Activated T-helper 1 cell treated with anti-CD3 and anti-CD28 coated beads, Interleukin-12 subunit alpha, Interleukin-12 subunit beta, Interleukin-2, Interleukin-4 antibody, amounts not matched to agents 30 ng/mL and 10 ng/mL and 1 ng/mL, durations not matched to agents 14 hours and 24 hours and 36 hours (primary cell): ENCODE measurements at regions of chr22 and their contacts with region 1.

Region 1: DNA sequence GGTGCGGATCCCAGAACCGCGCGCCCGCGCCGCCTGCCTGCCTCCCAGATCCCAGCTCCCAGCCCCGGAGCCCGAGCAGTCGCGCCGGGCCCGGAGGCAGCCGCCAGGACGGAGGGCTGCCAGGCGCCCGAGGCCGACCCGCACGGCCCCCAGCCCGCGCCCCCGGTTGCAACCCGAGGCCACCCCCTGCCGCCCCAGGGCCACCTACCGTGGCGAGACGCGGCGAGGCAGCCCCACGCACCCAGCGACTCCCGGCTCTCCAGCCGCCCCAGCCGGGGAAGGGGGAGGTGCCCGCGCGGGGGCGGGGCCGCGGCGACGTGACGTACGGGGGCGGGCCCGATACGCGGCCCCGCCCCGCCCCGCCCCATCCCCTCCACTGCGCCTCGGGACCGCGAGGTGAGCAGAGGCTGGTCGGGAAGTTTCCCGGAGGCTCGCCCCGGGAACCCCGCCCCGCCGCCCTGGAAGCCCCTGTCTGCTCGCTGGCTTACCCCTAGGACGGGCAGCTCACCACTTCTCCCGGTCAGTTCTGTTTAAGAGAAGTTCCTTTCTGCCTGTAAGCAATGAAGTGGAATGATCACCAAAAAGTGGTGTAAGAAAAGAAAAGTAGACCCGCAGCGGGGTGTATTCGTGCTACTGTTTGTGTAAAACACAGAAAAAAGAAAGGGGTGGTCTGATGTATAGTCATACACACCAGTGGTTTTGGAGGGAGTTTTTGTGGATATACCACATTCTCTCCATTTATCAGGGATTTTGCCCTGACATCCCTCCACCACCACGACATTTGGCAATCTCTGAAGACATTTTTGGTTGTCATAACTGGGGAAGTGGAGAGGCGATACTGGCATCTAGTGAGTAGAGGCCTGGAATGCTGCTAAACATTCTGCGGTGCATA is at the start of gene TPST2:
- DNase-seq: peak; percentile 74
- H3K4me3 Mint-ChIP-seq: peak within 1 kb of the TSS; percentile 95
- H3K27ac Mint-ChIP-seq: peak within 1 kb of the TSS; percentile 94
- H3K4me1 Mint-ChIP-seq: peaks cover 79% of the 10 kb centered on the region
- H3K27me3 Mint-ChIP-seq: no peaks in the 10 kb centered on the region
- total RNA-seq, gene TPST2: 36.1 and 37.0 TPM in 2 replicates

Region 2: GRCh38 chr22:26483439-26484359 is 106.4 kb before region 1 on chr22 and contains the starts of genes HPS4 and SRRD:
- intact Hi-C with region 1: loop called (anchors 1 kb)
- DNase-seq: peak; percentile 93
- H3K4me3 Mint-ChIP-seq: peak within 1 kb of the TSS; percentile 95
- H3K27ac Mint-ChIP-seq: peak within 1 kb of the TSS; percentile 94
- H3K4me1 Mint-ChIP-seq: peaks cover 70% of the 10 kb centered on the region
- H3K27me3 Mint-ChIP-seq: no peaks in the 10 kb centered on the region
- total RNA-seq, gene HPS4: 43.8 and 44.5 TPM in 2 replicates
- total RNA-seq, gene SRRD: 29.2 and 34.8 TPM in 2 replicates

Region 3: GRCh38 chr22:26511857-26512793 is 78.0 kb before region 1 on chr22 and contains the start of gene TFIP11:
- intact Hi-C with region 1: loop called (anchors 1 kb)
- DNase-seq: peak; percentile 91
- H3K4me3 Mint-ChIP-seq: peak within 1 kb of the TSS; percentile 100
- H3K27ac Mint-ChIP-seq: peak within 1 kb of the TSS; percentile 96
- H3K4me1 Mint-ChIP-seq: peaks cover 50% of the 10 kb centered on the region
- H3K27me3 Mint-ChIP-seq: no peaks in the 10 kb centered on the region
- total RNA-seq, gene TFIP11: 57.2 and 58.1 TPM in 2 replicates

Region 4: DNA sequence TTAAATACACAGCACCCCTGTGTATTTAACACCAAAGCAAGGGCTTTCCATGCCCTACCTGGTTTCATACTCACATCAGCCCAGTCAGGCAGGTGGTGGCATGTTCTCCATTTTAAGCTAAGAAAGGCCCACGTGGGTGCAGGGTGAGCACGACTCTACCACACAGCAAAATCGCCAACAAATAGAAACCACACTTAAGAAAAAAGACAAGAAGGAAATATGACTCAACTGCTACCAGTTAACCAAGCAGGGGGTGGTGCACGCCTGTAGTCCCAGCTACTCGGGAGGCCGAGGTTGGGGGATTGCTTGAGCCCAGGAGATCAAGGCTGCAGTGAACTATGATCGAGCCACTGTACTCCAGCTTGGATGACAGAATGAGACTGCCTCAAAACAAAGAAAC is 42.7 kb before region 1 on chr22:
- intact Hi-C with region 1: loop called (anchors 5 kb)
- DNase-seq: peak; percentile 14
- H3K4me3 Mint-ChIP-seq: no peak overlapping the region
- H3K27ac Mint-ChIP-seq: peak overlapping the region; percentile 72
- H3K4me1 Mint-ChIP-seq: peaks cover 56% of the 10 kb centered on the region
- H3K27me3 Mint-ChIP-seq: no peaks in the 10 kb centered on the region

Region 5: GRCh38 chr22:26568207-26568706 is 21.8 kb before region 1 on chr22:
- intact Hi-C with region 1: no loop called
- DNase-seq: no peak
- H3K4me3 Mint-ChIP-seq: no peak overlapping the region
- H3K27ac Mint-ChIP-seq: no peak overlapping the region
- H3K4me1 Mint-ChIP-seq: peaks cover 71% of the 10 kb centered on the region
- H3K27me3 Mint-ChIP-seq: no peaks in the 10 kb centered on the region

Region 6: DNA sequence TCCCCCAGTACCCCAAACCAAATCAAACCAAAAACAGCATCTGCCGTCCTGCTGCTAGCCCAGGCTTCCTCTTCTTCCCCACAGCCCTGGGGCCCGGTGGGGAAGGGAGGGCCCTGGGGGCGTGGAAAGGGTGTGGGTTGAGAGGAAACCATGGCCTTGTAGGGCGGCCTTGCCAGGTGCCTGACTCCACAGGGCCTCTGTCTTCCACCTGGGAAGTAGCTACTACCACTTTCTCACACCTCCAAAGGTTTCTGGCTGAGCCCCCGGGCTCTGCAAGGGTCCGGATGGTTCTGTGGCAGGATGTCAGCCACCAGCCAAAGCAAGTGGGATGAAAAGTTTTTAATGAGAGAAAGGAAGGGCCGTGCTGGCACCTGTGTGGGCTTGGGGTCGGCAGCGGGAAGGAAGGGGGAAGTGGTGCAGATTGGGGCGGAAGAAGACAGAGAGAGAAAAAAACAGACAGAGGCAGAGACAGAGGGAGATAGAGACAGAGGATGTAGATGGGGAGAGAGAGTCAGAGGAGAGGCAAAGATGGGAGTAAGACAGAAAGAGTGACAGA is 10.7 kb before region 1 on chr22:
- intact Hi-C with region 1: loop called (anchors 1 kb)
- DNase-seq: peak; percentile 59
- H3K4me3 Mint-ChIP-seq: peak overlapping the region; percentile 62
- H3K27ac Mint-ChIP-seq: peak overlapping the region; percentile 84
- H3K4me1 Mint-ChIP-seq: peaks cover 66% of the 10 kb centered on the region
- H3K27me3 Mint-ChIP-seq: no peaks in the 10 kb centered on the region

Region 7: GRCh38 chr22:26610072-26610958 is 20.2 kb after region 1 on chr22:
- intact Hi-C with region 1: loop called (anchors 1 kb)
- DNase-seq: peak; percentile 54
- H3K4me3 Mint-ChIP-seq: peak overlapping the region; percentile 53
- H3K27ac Mint-ChIP-seq: peak overlapping the region; percentile 92
- H3K4me1 Mint-ChIP-seq: peaks cover 32% of the 10 kb centered on the region
- H3K27me3 Mint-ChIP-seq: peaks cover 21% of the 10 kb centered on the region

Region 8: GRCh38 chr22:26658671-26659478 is 68.8 kb after region 1 on chr22:
- intact Hi-C with region 1: loop called (anchors 1 kb)
- DNase-seq: peak; percentile 78
- H3K4me3 Mint-ChIP-seq: peak overlapping the region; percentile 95
- H3K27ac Mint-ChIP-seq: peak overlapping the region; percentile 89
- H3K4me1 Mint-ChIP-seq: peaks cover 46% of the 10 kb centered on the region
- H3K27me3 Mint-ChIP-seq: peaks cover 9% of the 10 kb centered on the region

Region 9: DNA sequence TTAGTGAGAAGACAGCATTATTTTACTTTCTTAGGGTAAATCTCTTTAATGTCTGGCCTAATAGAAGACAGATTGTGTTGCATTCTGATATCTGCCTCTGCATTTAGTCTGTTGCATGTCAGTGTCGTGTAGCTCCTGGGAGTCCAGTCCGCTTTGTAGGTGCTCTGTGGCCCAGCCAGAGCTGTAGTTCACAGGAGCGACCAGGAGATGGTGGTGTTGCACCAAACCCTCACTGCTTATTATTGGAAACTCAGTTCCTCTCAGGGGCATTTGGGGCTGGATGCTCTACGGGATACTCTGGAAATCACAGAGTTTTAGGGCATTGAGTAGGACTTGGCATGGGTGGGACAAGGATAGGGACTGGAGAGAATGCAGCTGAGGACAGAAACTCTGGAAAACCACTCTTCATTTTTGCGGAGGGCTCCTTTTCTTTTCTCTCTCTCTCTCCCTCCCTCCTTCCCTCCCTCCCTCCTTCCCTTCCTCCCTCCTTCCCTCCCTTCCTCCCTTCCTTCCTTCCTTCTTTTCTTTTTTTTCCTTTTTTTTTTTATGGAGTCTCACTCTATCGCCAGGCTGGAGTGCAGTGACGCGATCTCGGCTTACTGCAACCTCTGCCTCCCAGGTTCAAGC is 89.0 kb after region 1 on chr22:
- intact Hi-C with region 1: no loop called
- DNase-seq: peak; percentile 62
- H3K4me3 Mint-ChIP-seq: no peak overlapping the region
- H3K27ac Mint-ChIP-seq: peak overlapping the region; percentile 62
- H3K4me1 Mint-ChIP-seq: peaks cover 35% of the 10 kb centered on the region
- H3K27me3 Mint-ChIP-seq: no peaks in the 10 kb centered on the region